ENCODE measurements at regions of chr2 and their contacts with region 1.

Region 1: DNA sequence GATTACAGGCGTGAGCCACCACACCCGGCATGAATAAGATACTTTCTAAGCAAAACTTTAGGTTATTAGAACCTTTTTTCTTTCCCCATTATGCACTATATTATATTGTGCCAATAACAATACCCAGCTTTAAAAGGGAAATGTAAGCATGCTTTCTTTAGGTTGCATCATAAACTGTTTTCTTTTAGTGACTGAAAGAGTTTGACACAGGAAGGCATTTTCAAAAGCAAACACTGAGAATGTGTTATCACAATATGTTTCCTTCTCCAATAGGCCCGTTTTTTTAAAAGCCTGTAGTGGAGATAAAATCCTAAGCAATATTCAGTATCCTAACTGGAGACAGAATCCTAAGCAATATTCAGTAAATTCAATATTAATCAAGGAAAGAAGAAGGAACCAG is 16.7 kb upstream of the EPB41L5 start:
- DNase-seq: no peak
- H3K4me3 ChIP-seq: no peak overlapping the region
- H3K27ac ChIP-seq: no peak overlapping the region
- H3K4me1 ChIP-seq: no peaks in the 10 kb centered on the region
- H3K27me3 ChIP-seq: no peaks in the 10 kb centered on the region
- CTCF ChIP-seq: no peak
- EP300 ChIP-seq: no peak
- POLR2A ChIP-seq: no peak
- RAD21 ChIP-seq: no peak

Region 2: DNA sequence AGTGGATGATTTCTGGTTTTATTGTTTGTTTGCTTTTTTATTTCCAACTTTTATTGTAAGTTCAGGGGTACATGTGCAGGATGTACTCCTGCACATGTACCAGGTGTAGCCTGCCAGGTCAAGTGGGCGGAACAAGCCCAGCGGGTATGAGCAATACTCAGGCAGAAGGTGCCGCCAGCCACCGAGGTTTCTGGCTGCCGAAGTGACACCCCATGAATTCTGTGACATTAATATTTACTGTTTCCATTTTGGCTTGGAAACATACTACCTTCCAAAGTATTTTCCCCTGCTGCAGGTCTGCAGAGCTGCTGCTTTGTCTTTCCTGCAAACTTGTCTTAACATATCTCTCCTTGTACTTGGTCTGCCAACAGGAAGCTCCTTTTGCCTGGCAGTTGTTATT is 158.0 kb before region 1 on chr2:
- CTCF ChIA-PET with region 1: no interaction called
- POLR2A ChIA-PET with region 1: no interaction called
- DNase-seq: no peak
- H3K4me3 ChIP-seq: no peak overlapping the region
- H3K27ac ChIP-seq: no peak overlapping the region
- H3K4me1 ChIP-seq: peaks cover 0 to 9% (median 3%) of the 10 kb centered on the region in 4 experiments; a peak in 4 of 7 replicates
- H3K27me3 ChIP-seq: no peaks in the 10 kb centered on the region
- CTCF ChIP-seq: no peak
- EP300 ChIP-seq: no peak
- POLR2A ChIP-seq: no peak
- RAD21 ChIP-seq: no peak

Region 3: DNA sequence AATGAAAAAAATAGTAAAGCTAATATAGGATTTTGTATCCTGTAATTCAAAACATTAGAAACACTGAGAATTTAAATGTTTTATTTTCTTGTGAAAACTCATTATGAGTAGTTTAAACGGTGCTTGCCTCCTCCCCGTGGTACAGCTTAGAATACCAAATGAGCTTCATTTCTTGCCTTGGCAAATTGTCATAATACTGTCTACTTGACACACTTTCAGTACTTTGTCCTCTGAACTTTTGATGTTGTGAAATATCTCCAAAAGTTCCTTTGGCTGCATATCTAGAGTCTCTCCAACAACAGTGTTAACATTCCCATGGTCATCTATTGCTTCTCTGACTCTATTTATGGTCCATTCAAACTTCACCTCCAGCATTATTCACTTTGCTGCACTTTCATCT is 45.2 kb before region 1 on chr2:
- CTCF ChIA-PET with region 1: no interaction called
- POLR2A ChIA-PET with region 1: no interaction called
- DNase-seq: no peak
- H3K4me3 ChIP-seq: no peak overlapping the region
- H3K27ac ChIP-seq: no peak overlapping the region
- H3K4me1 ChIP-seq: no peaks in the 10 kb centered on the region
- H3K27me3 ChIP-seq: no peaks in the 10 kb centered on the region
- CTCF ChIP-seq: no peak
- EP300 ChIP-seq: no peak
- POLR2A ChIP-seq: no peak
- RAD21 ChIP-seq: no peak

Region 4: GRCh38 chr2:119983108-119983507 is 13.0 kb before region 1 on chr2:
- CTCF ChIA-PET with region 1: interaction called, 13 read pairs
- POLR2A ChIA-PET with region 1: interaction called, 5 read pairs
- DNase-seq: no peak
- H3K4me3 ChIP-seq: no peak overlapping the region
- H3K27ac ChIP-seq: no peak overlapping the region
- H3K4me1 ChIP-seq: no peaks in the 10 kb centered on the region
- H3K27me3 ChIP-seq: no peaks in the 10 kb centered on the region
- CTCF ChIP-seq: no peak
- EP300 ChIP-seq: no peak
- POLR2A ChIP-seq: no peak
- RAD21 ChIP-seq: no peak

Measured in H1 (cell line).